HEK293T (cell line): ENCODE measurements at regions of chr10 and their contacts with region 1.

Region 1: GRCh38 chr10:124802313-124802675 is 675 bp downstream of the ABRAXAS2 start:
- DNase-seq: no peak

Region 2: DNA sequence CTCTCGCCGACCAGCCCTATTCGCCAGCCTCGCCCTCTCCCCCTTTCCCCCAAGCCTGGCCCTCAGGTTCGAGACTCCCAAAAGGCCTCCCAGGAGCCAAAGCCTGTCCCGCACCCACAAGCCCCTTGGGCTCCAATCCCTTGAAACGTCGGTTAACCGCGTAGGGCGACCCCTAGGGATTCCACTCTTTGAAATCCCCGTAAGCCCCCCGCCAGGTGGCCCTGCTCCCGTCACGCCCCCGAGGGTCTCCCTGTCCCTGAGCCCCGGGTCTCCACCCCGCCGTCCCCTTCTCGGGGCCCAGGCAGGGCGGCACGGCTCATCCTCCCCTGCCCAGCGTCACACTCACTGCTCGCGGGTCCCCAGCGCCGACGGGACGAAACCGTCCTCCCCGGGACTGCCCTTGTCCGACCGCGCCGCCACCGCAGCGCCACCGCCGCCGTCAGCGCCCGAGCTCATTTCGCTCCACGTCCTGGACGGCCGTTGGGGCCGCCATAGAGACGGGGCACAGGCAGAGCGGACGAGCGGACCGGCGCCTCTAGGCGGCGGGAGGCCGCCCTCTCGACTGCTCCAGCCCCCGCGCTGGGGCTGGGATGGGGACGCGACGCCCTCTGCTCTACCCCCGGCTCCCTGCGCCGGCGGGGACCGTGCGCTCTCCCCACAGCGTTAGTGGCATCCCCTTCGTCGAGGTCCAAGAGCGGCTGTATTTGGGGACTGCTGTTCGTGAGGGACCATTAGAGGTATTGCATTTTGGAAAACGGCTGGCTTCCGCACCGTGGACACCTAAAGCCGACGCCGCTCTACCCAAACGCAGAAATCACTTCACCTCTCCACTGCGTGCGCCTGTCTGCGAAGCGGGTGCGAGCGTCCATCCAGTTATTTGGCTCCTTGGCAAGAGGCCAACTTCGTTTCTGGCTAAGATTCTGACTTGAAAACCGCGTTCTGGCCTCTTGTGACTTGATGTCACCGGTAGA is 10.6 kb before region 1 on chr10 and contains the start of gene EEF1AKMT2:
- CTCF ChIA-PET with region 1: no interaction called
- POLR2A ChIA-PET with region 1: interaction called, 24 read pairs
- DNase-seq: peak; percentile 95